ENCODE measurements at regions of chr7 and their contacts with region 1.

Region 1: DNA sequence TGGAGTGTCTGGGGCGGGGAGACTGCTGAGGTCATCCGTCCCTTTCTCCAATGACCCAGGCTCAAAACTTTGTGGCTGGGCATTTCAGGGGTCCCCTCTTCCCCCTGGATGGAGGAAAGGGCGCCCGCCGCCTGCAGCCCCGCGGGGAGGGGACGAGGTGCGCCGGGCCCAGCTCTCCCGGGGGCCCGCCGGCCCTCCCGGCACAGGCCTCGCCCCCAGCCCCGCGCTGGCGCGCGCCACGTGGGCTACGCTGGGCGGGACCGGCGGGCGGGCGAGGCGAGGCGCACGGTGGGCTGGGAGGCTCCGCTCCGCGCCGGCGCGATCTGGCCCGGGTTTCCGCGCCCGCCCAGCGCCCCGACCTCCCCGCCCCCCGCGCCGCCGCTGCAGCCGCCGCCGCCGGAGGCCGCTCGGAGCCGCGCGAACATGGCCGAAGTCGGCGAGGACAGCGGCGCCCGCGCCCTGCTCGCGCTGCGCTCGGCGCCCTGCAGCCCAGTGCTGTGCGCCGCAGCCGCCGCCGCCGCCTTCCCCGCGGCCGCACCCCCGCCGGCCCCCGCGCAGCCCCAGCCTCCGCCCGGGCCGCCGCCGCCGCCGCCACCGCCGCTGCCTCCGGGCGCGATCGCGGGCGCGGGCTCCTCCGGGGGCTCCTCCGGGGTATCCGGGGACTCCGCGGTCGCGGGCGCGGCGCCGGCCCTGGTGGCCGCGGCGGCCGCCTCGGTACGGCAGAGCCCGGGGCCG is at the start of gene FOXK1:
- DNase-seq: peak; percentile 93
- H3K4me3 Mint-ChIP-seq: peak within 1 kb of the TSS; percentile 82
- H3K27ac Mint-ChIP-seq: peak within 1 kb of the TSS; percentile 89
- H3K4me1 Mint-ChIP-seq: peaks cover 13% of the 10 kb centered on the region
- H3K27me3 Mint-ChIP-seq: peaks cover 13% of the 10 kb centered on the region
- CTCF ChIP-seq: no peak
- total RNA-seq, gene FOXK1: 65.9 and 67.1 TPM in 2 replicates

Region 2: GRCh38 chr7:4667776-4668509 is 14.1 kb before region 1 on chr7:
- CTCF ChIA-PET with region 1: no interaction called
- intact Hi-C with region 1: no loop called
- DNase-seq: no peak
- H3K4me3 Mint-ChIP-seq: no peak overlapping the region
- H3K27ac Mint-ChIP-seq: no peak overlapping the region
- H3K4me1 Mint-ChIP-seq: no peaks in the 10 kb centered on the region
- H3K27me3 Mint-ChIP-seq: peaks cover 26% of the 10 kb centered on the region
- CTCF ChIP-seq: no peak

Region 3: DNA sequence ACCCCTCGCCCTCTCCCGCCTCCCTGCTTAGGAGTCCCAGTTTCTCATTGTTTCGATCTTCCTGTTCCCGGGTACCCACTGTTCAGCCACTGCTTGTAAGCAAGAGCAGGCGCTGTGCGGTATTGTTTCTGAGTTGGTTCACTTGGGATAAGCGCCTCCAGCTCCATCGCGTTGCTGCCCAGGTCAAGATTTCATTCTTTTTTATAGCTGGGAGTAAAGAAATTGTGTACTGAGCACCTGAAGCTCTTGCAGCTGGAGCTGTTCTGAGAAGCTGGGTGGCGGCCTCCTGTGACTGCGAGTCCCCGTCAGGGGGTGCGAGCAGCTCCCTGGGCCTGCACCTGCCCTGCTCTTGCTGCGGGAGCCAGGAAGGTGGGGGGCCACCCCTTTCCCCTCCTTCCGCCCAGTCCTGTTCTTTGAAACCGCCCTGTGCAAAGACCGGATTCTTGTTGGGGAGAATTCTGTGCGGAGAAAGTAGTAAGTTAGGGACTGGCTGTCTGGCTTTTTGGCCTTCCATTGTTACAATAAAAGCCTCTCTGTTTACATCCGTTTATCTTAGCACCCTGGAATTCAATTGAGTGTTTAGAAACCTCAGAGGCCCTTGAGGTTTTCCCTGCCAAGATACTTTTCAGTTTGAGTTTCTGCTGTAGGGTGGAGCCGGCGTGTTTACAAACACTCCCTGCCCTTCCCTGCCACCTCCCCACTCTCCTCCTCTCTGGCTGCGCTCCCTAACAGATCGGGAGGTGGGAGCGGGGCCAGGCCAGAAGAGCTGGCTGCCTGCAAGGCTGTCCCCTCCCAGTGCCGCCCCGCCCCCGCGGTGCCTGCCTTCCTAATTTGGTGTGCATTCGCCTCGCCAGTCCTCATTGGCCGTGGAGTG is 62.6 kb after region 1 on chr7:
- CTCF ChIA-PET with region 1: no interaction called
- intact Hi-C with region 1: loop called (anchors 2 kb)
- DNase-seq: peak; percentile 100
- H3K4me3 Mint-ChIP-seq: peak overlapping the region; percentile 66
- H3K27ac Mint-ChIP-seq: peak overlapping the region; percentile 70
- H3K4me1 Mint-ChIP-seq: peaks cover 53% of the 10 kb centered on the region
- H3K27me3 Mint-ChIP-seq: no peaks in the 10 kb centered on the region
- CTCF ChIP-seq: no peak

Region 4: DNA sequence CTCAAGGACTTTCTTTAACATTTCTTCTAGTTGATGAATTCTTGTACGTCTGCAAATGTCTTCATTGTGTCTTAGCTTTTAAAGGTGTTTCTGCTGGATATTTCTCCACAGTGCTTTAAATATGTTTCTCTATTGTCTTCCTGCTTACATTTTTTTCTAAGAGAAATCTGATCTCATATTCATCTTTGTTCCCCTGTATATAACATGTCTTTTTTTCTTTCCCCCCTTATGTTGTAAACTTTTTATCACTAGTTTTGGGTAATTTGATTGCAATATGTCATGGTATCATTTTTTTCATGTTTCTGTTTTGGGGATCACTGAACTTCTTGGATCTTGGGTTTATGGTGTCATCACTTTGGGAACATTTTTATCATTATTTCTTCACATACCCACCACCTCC is 371.1 kb after region 1 on chr7:
- CTCF ChIA-PET with region 1: no interaction called
- intact Hi-C with region 1: no loop called
- DNase-seq: no peak
- H3K4me3 Mint-ChIP-seq: no peak overlapping the region
- H3K27ac Mint-ChIP-seq: peak overlapping the region; percentile 17
- H3K4me1 Mint-ChIP-seq: no peaks in the 10 kb centered on the region
- H3K27me3 Mint-ChIP-seq: no peaks in the 10 kb centered on the region
- CTCF ChIP-seq: no peak